IMR-90 (cell line): ENCODE measurements at regions of chr3 and their contacts with region 1.

Region 1: GRCh38 chr3:55169608-55170010 is 241.8 kb upstream of the LRTM1 start:
- DNase-seq: peak; percentile 100
- ATAC-seq: peak; percentile 60
- H3K4me3 ChIP-seq: no peak overlapping the region
- H3K27ac ChIP-seq: peak overlapping the region; percentile 98; the same call in 1 of the 2 replicates
- H3K4me1 ChIP-seq: peaks cover 35% of the 10 kb centered on the region
- H3K27me3 ChIP-seq: no peaks in the 10 kb centered on the region
- CTCF ChIP-seq: no peak
- POLR2A ChIP-seq: no peak
- RAD21 ChIP-seq: 0 out of 2 replicates have a peak, but pooled peaks have one; percentile 24

Region 2: DNA sequence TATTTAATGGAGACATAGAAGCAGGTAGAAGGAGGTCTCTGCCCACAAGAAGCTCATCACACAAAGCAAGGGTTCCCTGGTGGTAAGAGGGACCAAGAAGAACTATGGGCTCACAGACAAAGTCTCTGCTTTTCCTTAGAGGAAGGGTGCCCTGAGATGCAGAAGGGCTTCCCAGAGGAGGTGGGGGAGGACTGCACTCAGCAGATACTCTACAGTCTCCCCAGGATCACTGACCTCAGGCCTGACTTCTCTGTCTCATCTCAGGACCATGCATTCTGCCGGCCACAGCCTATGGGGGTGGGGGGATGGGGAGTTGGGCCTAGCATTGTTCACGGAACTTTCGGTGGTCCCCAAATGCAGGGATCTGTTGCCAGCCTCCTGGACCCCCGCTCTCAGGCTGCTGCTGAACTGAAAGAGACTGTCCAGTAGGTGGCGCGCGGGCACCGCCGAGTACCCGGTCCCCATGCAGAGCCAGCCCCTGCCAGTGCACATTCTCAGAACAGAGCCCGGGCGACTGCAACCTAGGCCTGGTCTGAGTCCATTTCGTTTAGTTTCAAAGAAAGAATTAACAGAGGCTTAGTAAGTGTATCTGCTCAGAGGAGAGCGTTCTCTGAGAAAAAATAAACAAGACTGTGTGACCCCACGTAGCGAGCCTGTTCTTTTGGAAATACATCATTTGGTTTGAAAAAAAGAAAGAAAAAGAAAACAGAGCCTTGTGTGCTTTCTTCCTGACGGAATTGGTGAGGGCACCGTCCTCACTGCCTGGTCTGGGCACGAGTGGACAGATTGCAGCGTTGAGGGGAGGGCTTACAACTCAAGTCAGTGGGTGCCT is 315.8 kb before region 1 on chr3:
- CTCF ChIA-PET with region 1: no interaction called
- POLR2A ChIA-PET with region 1: no interaction called
- dilution Hi-C with region 1: no loop called
- in situ Hi-C with region 1: no loop called
- intact Hi-C with region 1: loop called (anchors 5 kb)
- DNase-seq: peak; percentile 74
- ATAC-seq: peak; percentile 98
- H3K4me3 ChIP-seq: no peak overlapping the region
- H3K27ac ChIP-seq: peak overlapping the region; percentile 79
- H3K4me1 ChIP-seq: peaks cover 8% of the 10 kb centered on the region
- H3K27me3 ChIP-seq: peaks cover 5% of the 10 kb centered on the region; the same call in 1 of the 2 replicates
- CTCF ChIP-seq: peak; percentile 83
- POLR2A ChIP-seq: no peak
- RAD21 ChIP-seq: peak; percentile 93

Region 3: GRCh38 chr3:54882129-54882833 is 287.3 kb before region 1 on chr3:
- CTCF ChIA-PET with region 1: no interaction called
- POLR2A ChIA-PET with region 1: no interaction called
- dilution Hi-C with region 1: no loop called
- in situ Hi-C with region 1: loop called (anchors 5 kb)
- intact Hi-C with region 1: no loop called
- DNase-seq: peak; percentile 98
- ATAC-seq: peak; percentile 94
- H3K4me3 ChIP-seq: no peak overlapping the region
- H3K27ac ChIP-seq: peak overlapping the region; percentile 82
- H3K4me1 ChIP-seq: peaks cover 14% of the 10 kb centered on the region
- H3K27me3 ChIP-seq: no peaks in the 10 kb centered on the region
- CTCF ChIP-seq: no peak
- POLR2A ChIP-seq: no peak
- RAD21 ChIP-seq: no peak

Region 4: GRCh38 chr3:54967731-54968161 is 201.9 kb before region 1 on chr3:
- CTCF ChIA-PET with region 1: interaction called, 3 read pairs
- POLR2A ChIA-PET with region 1: interaction called, 3 read pairs
- dilution Hi-C with region 1: no loop called
- in situ Hi-C with region 1: no loop called
- intact Hi-C with region 1: loop called (anchors 5 kb)
- DNase-seq: peak; percentile 90
- ATAC-seq: peak; percentile 22; the same call in 1 of the 2 replicates
- H3K4me3 ChIP-seq: no peak overlapping the region
- H3K27ac ChIP-seq: 0 out of 2 replicates have a peak overlapping the region, but pooled peaks have one; percentile 20
- H3K4me1 ChIP-seq: peaks cover 33% of the 10 kb centered on the region
- H3K27me3 ChIP-seq: no peaks in the 10 kb centered on the region
- CTCF ChIP-seq: no peak
- POLR2A ChIP-seq: no peak
- RAD21 ChIP-seq: no peak

Region 5: DNA sequence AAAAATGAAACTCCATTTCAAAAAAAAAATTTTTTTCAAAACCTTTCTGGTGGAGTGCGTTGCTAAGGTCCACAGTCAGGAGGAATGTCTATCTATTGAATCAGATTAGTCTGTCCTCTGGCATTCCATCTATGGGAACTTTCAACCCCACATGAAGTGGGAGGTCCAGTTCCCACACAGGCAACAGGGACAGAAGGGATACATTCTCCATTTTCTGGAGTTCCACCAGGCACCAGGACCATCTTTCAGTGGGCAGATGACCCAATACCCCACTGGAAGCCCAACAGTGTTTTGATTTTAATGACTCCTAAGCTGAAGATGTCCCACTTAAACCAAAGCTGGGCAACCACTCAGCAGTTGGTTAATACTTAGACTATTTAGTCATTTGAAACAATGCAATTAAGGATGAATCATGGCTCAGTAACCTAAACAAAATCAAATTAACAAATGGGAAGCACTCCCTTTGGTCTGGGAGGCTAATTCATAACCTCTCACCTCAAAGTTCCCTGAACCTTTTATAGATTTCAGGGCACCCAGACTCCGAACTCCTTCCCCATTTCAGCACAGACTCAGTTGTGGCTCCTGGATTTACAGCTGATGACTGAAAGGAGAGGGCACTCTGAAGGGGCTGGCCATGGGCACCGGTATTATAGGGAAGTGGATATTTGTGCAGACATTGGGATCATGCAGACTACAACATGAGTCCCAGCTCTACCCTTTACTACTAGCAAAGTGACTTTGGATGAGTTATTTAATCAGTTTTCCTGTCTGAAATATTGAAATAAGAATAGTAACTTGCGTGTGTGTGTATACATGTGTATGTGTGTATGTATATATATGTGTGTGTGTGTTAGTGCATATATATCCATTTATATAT is 22.5 kb after region 1 on chr3:
- CTCF ChIA-PET with region 1: no interaction called
- POLR2A ChIA-PET with region 1: interaction called, 3 read pairs
- dilution Hi-C with region 1: no loop called
- in situ Hi-C with region 1: no loop called
- intact Hi-C with region 1: loop called (anchors 2 kb)
- DNase-seq: peak; percentile 98
- ATAC-seq: peak; percentile 82
- H3K4me3 ChIP-seq: no peak overlapping the region
- H3K27ac ChIP-seq: peak overlapping the region; percentile 94
- H3K4me1 ChIP-seq: peaks cover 15% of the 10 kb centered on the region
- H3K27me3 ChIP-seq: no peaks in the 10 kb centered on the region
- CTCF ChIP-seq: no peak
- POLR2A ChIP-seq: peak; percentile 52; the same call in 1 of the 2 replicates
- RAD21 ChIP-seq: peak; percentile 45

Region 6: GRCh38 chr3:55330355-55330754 is 160.7 kb after region 1 on chr3:
- CTCF ChIA-PET with region 1: no interaction called
- POLR2A ChIA-PET with region 1: no interaction called
- dilution Hi-C with region 1: no loop called
- in situ Hi-C with region 1: no loop called
- intact Hi-C with region 1: loop called (anchors 5 kb)
- DNase-seq: peak; percentile 99
- ATAC-seq: peak; percentile 79
- H3K4me3 ChIP-seq: no peak overlapping the region
- H3K27ac ChIP-seq: peak overlapping the region; percentile 19; the same call in 1 of the 2 replicates
- H3K4me1 ChIP-seq: peaks cover 29% of the 10 kb centered on the region
- H3K27me3 ChIP-seq: no peaks in the 10 kb centered on the region
- CTCF ChIP-seq: no peak
- POLR2A ChIP-seq: peak; percentile 51; the same call in 1 of the 2 replicates
- RAD21 ChIP-seq: peak; percentile 30

Region 7: GRCh38 chr3:56101576-56101975 is 932.0 kb after region 1 on chr3:
- CTCF ChIA-PET with region 1: no interaction called
- POLR2A ChIA-PET with region 1: no interaction called
- dilution Hi-C with region 1: no loop called
- in situ Hi-C with region 1: no loop called
- intact Hi-C with region 1: no loop called
- DNase-seq: no peak
- ATAC-seq: no peak
- H3K4me3 ChIP-seq: no peak overlapping the region
- H3K27ac ChIP-seq: no peak overlapping the region
- H3K4me1 ChIP-seq: no peaks in the 10 kb centered on the region
- H3K27me3 ChIP-seq: peaks cover 2% of the 10 kb centered on the region; the same call in 1 of the 2 replicates
- CTCF ChIP-seq: no peak
- POLR2A ChIP-seq: no peak
- RAD21 ChIP-seq: no peak